ENCODE measurements at regions of chr6 and their contacts with region 1.

Region 1: DNA sequence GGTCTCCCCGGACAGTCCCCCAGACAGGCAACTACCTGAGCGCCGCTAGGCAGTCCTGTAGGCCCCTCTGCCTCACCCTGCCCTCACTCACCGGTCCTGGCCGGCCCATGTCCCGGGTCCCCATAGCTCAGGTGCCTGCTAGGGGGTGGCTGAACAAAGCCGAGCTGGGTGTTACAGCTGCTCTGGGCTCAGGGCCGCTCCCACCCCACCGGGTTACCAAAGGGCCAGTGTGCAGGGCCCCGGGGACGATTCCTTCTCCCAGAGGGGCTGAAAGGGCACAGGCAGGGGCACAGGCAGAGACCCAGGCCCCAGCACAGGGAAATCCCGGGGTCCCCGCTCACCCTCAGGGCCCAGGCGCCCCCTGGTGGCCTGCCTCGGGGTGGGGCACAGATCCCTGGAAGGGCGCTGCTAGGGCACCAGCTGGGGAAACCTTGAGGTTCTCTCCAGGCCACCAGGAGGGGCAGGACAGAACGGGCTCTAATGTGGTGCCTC is 118.4 kb downstream of the GRM4 start:
- DNase-seq: peak; percentile 65
- H3K4me3 Mint-ChIP-seq: no peak overlapping the region
- H3K27ac Mint-ChIP-seq: no peak overlapping the region
- H3K4me1 Mint-ChIP-seq: no peaks in the 10 kb centered on the region
- H3K27me3 Mint-ChIP-seq: no peaks in the 10 kb centered on the region

Region 2: GRCh38 chr6:33744001-33744848 is 283.3 kb before region 1 on chr6:
- CTCF ChIA-PET with region 1: interaction called, 39 read pairs
- POLR2A ChIA-PET with region 1: no interaction called
- intact Hi-C with region 1: loop called (anchors 1 kb)
- DNase-seq: peak; percentile 82
- H3K4me3 Mint-ChIP-seq: no peak overlapping the region
- H3K27ac Mint-ChIP-seq: no peak overlapping the region
- H3K4me1 Mint-ChIP-seq: peaks cover 2% of the 10 kb centered on the region
- H3K27me3 Mint-ChIP-seq: peaks cover 7% of the 10 kb centered on the region

Region 3: GRCh38 chr6:33802186-33803064 is 225.1 kb before region 1 on chr6:
- CTCF ChIA-PET with region 1: no interaction called
- POLR2A ChIA-PET with region 1: no interaction called
- intact Hi-C with region 1: no loop called
- DNase-seq: no peak
- H3K4me3 Mint-ChIP-seq: no peak overlapping the region
- H3K27ac Mint-ChIP-seq: no peak overlapping the region
- H3K4me1 Mint-ChIP-seq: peaks cover 2% of the 10 kb centered on the region
- H3K27me3 Mint-ChIP-seq: peaks cover 4% of the 10 kb centered on the region

Region 4: GRCh38 chr6:33860706-33861474 is 166.6 kb before region 1 on chr6:
- CTCF ChIA-PET with region 1: interaction called, 3 read pairs
- POLR2A ChIA-PET with region 1: no interaction called
- intact Hi-C with region 1: loop called (anchors 5 kb)
- DNase-seq: peak; percentile 64
- H3K4me3 Mint-ChIP-seq: no peak overlapping the region
- H3K27ac Mint-ChIP-seq: peak overlapping the region; percentile 33
- H3K4me1 Mint-ChIP-seq: peaks cover 50% of the 10 kb centered on the region
- H3K27me3 Mint-ChIP-seq: no peaks in the 10 kb centered on the region

Region 5: GRCh38 chr6:33947916-33948594 is 79.4 kb before region 1 on chr6:
- CTCF ChIA-PET with region 1: no interaction called
- POLR2A ChIA-PET with region 1: no interaction called
- intact Hi-C with region 1: no loop called
- DNase-seq: no peak
- H3K4me3 Mint-ChIP-seq: no peak overlapping the region
- H3K27ac Mint-ChIP-seq: no peak overlapping the region
- H3K4me1 Mint-ChIP-seq: no peaks in the 10 kb centered on the region
- H3K27me3 Mint-ChIP-seq: no peaks in the 10 kb centered on the region

Measured in activated CD4-positive, alpha-beta memory T cell treated with anti-CD3 and anti-CD28 coated beads for 36 hours (primary cell).